ENCODE measurements at regions of chr12 and their contacts with region 1.

Region 1: DNA sequence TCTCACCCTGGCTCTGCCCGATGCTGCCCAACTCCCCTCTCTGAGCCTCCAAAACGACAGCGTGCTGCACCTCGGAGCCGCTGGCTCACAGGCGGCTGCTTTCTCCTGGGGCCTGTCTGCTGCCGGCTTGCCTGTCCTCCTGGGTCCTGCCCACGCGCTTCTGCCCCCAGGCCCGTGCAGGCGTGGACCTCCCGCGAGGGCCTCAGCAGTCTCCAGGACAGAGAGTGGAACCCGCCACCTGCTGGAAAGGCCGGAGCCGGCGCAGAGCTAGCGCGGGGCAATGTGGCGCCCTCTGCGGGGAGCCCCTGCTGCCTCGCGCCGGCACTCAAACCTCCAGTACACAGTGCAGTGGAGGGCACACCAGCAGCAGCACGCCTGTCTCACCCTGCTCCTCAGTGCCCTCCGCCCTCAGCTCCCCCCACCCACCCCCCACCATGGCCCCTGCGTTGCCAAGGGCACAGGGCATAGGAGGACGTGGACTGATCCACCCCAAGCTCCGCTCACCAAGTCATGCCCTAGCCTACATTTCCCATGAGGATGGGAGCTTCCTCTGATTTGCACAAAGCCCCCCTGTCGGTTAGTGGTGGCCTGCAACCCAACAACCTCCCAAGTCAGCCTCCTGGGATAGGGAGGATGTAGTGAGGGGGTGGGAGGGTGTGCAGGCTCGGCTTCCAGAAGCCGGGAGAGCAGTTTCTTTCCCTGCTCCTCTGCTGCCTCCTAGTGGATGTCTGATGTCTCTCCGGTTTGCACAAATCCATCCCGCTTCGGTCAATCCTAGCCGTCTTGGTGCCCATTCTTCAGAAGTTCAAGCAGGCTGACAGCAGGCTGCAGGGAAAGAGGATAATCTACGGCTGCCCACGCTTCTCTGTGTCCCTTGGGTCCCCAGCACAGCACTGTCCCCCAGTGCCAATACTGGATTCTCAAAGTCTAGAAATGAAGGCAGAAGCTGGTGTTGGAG is 25.2 kb downstream of the KRT8 start:
- DNase-seq: peak; percentile 69 to 86
- H3K4me3 ChIP-seq: peak overlapping the region; percentile 17 to 28
- H3K27ac ChIP-seq: peak overlapping the region in 1 of 2 donors; percentile 5
- H3K4me1 ChIP-seq: peaks cover 0 to 22% (median 10%) of the 10 kb centered on the region in 4 donors
- H3K27me3 ChIP-seq: peaks cover 0 to 3% of the 10 kb centered on the region in 2 donors
- CTCF ChIP-seq: peak; percentile 66 to 90

Region 2: DNA sequence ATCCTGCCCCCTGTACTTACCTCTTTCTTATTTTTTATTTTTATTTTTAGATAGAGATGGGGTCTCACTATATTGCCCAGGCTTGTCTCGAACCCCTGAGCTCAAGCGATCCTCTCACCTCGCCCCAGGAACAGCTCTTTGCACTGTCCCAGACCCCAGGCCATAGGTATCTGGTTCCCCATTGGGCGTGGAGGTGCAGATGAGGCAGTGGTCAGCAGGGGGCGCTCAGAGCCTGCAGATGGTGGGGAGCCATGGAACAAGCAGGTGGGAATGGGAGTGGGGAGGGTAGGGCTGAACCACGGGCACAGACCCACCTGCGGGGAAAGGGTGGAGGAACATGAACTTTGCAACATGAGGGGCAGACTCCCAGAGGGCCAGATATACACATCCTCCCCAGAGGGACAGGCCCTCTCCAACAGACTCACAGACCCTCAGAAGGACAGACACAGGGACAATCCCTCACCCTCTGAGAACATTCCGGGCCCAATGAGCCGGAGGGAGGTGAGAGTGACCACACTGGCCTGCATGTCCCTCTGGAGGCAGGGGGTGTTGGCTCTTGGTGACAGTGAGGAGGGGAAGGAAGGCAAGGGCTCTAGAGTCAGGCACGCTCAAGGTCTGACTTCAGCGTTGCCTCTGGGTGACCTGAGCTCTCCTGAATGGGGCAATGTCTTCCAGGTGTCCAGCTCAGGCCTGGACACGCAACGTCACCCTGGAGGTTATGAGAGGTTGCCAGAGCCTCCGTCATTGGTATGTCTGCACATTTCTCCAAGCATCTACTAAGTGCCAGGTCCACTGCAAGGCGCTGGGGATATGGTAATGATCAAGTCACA is 722.7 kb before region 1 on chr12:
- intact Hi-C with region 1: loop called (anchors 5 kb)
- DNase-seq: peak; percentile 79 to 84
- H3K4me3 ChIP-seq: no peak overlapping the region
- H3K27ac ChIP-seq: no peak overlapping the region
- H3K4me1 ChIP-seq: peaks cover 0 to 9% (median 8%) of the 10 kb centered on the region in 4 donors
- H3K27me3 ChIP-seq: peaks cover 0 to 3% of the 10 kb centered on the region in 2 donors
- CTCF ChIP-seq: peak; percentile 93 to 96

Region 3: DNA sequence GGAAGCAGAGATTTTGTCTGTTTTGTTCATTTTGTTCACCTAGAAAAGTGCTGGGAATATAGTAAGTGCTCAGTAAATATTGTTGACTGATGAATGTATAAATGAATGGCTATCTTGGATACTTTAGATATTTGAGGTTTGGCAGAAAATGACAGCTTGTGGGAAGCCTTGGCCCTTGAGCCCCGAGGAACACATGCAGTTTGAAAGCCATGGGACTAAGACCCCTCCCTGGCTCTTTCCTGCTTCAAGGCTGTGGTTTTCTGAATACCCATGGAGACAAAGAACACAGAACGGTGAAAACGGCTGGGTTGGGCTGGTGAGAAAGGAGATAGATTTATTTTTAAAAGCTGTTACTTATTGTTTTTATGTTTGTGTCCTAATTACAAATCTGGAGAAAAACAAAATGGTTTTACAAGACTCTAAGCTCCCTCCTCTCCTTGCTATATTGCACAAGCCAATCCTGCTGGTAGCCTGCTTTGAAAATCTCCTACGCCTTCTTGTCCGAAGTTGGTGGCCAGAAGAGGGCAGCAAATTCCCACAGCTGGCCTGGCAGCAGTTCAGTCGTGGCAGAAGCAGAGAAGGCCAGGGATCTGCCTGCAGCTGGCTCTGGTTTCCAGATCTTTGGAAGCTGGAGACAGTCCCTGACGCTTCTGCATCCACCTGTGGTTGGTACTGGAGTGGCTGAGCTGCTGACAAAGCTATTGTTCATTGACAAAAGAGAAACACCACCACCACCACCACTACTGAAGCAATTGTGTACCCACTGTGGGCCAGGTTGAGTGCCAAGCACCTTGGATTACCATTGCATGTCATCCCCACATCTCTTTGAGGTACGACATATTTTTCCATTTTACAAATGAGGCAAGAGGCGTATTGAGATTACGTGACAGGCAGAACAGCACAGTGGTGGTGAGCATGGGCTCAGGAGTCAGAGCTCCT is 507.2 kb before region 1 on chr12:
- intact Hi-C with region 1: loop called (anchors 2 kb)
- DNase-seq: peak; percentile 80 to 92
- H3K4me3 ChIP-seq: no peak overlapping the region
- H3K27ac ChIP-seq: peak overlapping the region; percentile 64 to 67
- H3K4me1 ChIP-seq: peaks cover 0 to 19% (median 11%) of the 10 kb centered on the region in 4 donors
- H3K27me3 ChIP-seq: no peaks in the 10 kb centered on the region
- CTCF ChIP-seq: peak; percentile 77 to 86

Region 4: DNA sequence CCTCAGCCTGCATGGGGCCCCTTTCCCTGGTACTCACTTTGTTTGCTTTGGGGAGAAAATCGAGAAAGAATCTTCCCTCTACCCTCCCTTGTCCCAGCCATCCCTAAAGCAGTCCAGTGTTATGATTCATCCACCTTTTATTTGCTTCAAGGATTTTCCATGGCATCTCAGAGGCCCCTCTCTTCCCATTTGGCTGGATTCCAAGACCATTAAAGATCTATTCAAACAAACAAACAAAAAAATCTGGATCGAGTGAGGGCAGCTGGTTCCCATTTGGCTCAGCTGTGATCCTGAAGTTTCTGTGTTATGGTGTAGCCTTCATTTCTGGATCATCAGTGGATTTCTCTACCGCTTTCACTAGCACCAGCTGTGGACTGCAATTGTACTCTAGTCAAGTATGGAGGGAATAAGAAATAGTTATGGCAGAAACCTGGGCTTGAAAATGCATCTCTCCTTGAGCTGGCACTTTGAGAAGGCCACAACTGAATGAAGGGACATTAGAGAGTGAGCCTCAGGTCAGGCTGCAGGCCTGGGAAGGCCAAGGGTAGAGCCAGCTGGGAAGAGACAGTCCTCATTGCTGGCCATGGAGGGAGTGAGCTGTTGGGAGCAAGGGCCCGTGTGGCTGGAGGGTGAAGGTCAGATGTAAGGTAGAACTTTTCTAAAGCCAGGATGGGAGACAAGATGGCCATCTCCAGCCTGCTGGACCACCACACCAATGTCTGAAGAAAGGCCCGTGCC is 340.4 kb before region 1 on chr12:
- intact Hi-C with region 1: no loop called
- DNase-seq: no peak
- H3K4me3 ChIP-seq: no peak overlapping the region
- H3K27ac ChIP-seq: no peak overlapping the region
- H3K4me1 ChIP-seq: peaks cover 0 to 25% (median 3%) of the 10 kb centered on the region in 4 donors
- H3K27me3 ChIP-seq: no peaks in the 10 kb centered on the region
- CTCF ChIP-seq: no peak

Region 5: GRCh38 chr12:53031617-53032016 is 151.9 kb after region 1 on chr12:
- intact Hi-C with region 1: no loop called
- DNase-seq: no peak
- H3K4me3 ChIP-seq: no peak overlapping the region
- H3K27ac ChIP-seq: no peak overlapping the region
- H3K4me1 ChIP-seq: no peaks in the 10 kb centered on the region
- H3K27me3 ChIP-seq: no peaks in the 10 kb centered on the region
- CTCF ChIP-seq: no peak

Measured in tibial artery (tissue), 4 donors.